CD4-positive, alpha-beta T cell (primary cell): ENCODE measurements at regions of chr7 and their contacts with region 1.

Region 1: GRCh38 chr7:130440527-130441365 is at the start of gene CEP41:
- DNase-seq: peak; percentile 81 to 95 (median 86)
- ATAC-seq: peak; percentile 95
- H3K4me3 ChIP-seq: peak within 1 kb of the TSS; percentile 67
- H3K4me3 Mint-ChIP-seq: peak within 1 kb of the TSS; percentile 99
- H3K27ac ChIP-seq: peak within 1 kb of the TSS; percentile 58 to 65
- H3K27ac Mint-ChIP-seq: peak within 1 kb of the TSS; percentile 89
- H3K4me1 ChIP-seq: peaks cover 13% of the 10 kb centered on the region
- H3K4me1 Mint-ChIP-seq: peaks cover 59% of the 10 kb centered on the region
- H3K27me3 ChIP-seq: no peaks in the 10 kb centered on the region
- H3K27me3 Mint-ChIP-seq: no peaks in the 10 kb centered on the region
- CTCF ChIP-seq: no peak
- total RNA-seq, gene CEP41: 3.3 to 4.8 TPM

Region 2: GRCh38 chr7:130668257-130669084 is 227.7 kb after region 1 on chr7 and contains the start of gene COPG2:
- CTCF ChIA-PET with region 1: no interaction called
- POLR2A ChIA-PET with region 1: no interaction called
- intact Hi-C with region 1: loop called in 1 of 2 experiments (anchors 5 kb)
- DNase-seq: peak; percentile 21 to 85 (median 68)
- ATAC-seq: peak; percentile 77
- H3K4me3 ChIP-seq: peak within 1 kb of the TSS; percentile 83
- H3K4me3 Mint-ChIP-seq: peak within 1 kb of the TSS; percentile 95
- H3K27ac ChIP-seq: peak within 1 kb of the TSS; percentile 39 to 41
- H3K27ac Mint-ChIP-seq: peak within 1 kb of the TSS; percentile 82
- H3K4me1 ChIP-seq: peaks cover 13% of the 10 kb centered on the region
- H3K4me1 Mint-ChIP-seq: peaks cover 21% of the 10 kb centered on the region
- H3K27me3 ChIP-seq: no peaks in the 10 kb centered on the region
- H3K27me3 Mint-ChIP-seq: no peaks in the 10 kb centered on the region
- CTCF ChIP-seq: no peak
- total RNA-seq, gene COPG2: 4.1 to 4.3 TPM